ENCODE measurements at regions of chr1 and their contacts with region 1.

Region 1: DNA sequence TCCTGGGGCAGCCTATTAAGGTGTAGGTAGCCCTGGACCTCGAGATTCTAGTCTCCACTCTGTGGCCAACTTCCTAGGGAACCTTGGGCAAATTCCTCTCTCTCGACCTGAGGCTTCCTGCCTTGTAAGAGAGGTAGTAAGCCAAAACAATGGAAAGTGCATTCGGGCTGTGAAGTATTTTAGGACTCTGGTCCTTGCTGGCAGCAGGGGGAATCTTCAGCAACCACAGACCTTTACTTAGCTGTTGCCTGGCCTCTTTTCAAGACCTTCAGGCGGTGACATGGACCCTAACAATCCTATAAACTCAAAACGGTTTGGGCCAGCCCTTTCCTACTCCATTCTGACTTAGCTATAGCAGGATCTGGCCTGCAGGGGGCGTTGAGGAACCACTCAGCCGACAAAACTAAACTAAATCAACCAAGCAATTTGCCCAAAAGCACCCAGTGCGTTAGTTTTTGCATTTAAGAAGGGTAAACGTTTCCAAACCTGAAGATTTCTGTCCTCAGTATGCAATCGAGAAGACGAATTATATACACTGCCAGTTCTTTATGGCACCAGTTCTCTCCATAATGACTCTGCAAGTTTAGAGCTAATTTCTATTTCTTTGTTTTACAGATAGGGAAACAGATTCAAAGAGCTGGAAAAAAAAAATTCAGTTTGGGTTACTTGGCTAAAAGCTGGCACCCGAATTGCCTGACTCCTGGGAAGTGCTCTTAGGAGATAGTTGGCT is 10.9 kb upstream of the SESN2 start:
- DNase-seq: peak; percentile 73
- H3K4me3 Mint-ChIP-seq: peak overlapping the region; percentile 80
- H3K27ac Mint-ChIP-seq: peak overlapping the region; percentile 96
- H3K4me1 Mint-ChIP-seq: peaks cover 38% of the 10 kb centered on the region
- H3K27me3 Mint-ChIP-seq: no peaks in the 10 kb centered on the region
- CTCF ChIP-seq: peak; percentile 86

Region 2: GRCh38 chr1:28322194-28322593 is 73.7 kb after region 1 on chr1:
- CTCF ChIA-PET with region 1: interaction called, 11 read pairs
- intact Hi-C with region 1: loop called (anchors 5 kb)
- DNase-seq: peak; percentile 75
- H3K4me3 Mint-ChIP-seq: no peak overlapping the region
- H3K27ac Mint-ChIP-seq: no peak overlapping the region
- H3K4me1 Mint-ChIP-seq: peaks cover 22% of the 10 kb centered on the region
- H3K27me3 Mint-ChIP-seq: no peaks in the 10 kb centered on the region
- CTCF ChIP-seq: no peak

Region 3: GRCh38 chr1:28354121-28354520 is 105.7 kb after region 1 on chr1:
- CTCF ChIA-PET with region 1: interaction called, 15 read pairs
- intact Hi-C with region 1: loop called (anchors 5 kb)
- DNase-seq: peak; percentile 37
- H3K4me3 Mint-ChIP-seq: no peak overlapping the region
- H3K27ac Mint-ChIP-seq: peak overlapping the region; percentile 60
- H3K4me1 Mint-ChIP-seq: peaks cover 29% of the 10 kb centered on the region
- H3K27me3 Mint-ChIP-seq: no peaks in the 10 kb centered on the region
- CTCF ChIP-seq: no peak

Region 4: GRCh38 chr1:28359592-28360239 is 111.3 kb after region 1 on chr1:
- CTCF ChIA-PET with region 1: interaction called, 15 read pairs
- intact Hi-C with region 1: loop called (anchors 5 kb)
- DNase-seq: peak; percentile 73
- H3K4me3 Mint-ChIP-seq: no peak overlapping the region
- H3K27ac Mint-ChIP-seq: no peak overlapping the region
- H3K4me1 Mint-ChIP-seq: peaks cover 9% of the 10 kb centered on the region
- H3K27me3 Mint-ChIP-seq: no peaks in the 10 kb centered on the region
- CTCF ChIP-seq: peak; percentile 36

Region 5: DNA sequence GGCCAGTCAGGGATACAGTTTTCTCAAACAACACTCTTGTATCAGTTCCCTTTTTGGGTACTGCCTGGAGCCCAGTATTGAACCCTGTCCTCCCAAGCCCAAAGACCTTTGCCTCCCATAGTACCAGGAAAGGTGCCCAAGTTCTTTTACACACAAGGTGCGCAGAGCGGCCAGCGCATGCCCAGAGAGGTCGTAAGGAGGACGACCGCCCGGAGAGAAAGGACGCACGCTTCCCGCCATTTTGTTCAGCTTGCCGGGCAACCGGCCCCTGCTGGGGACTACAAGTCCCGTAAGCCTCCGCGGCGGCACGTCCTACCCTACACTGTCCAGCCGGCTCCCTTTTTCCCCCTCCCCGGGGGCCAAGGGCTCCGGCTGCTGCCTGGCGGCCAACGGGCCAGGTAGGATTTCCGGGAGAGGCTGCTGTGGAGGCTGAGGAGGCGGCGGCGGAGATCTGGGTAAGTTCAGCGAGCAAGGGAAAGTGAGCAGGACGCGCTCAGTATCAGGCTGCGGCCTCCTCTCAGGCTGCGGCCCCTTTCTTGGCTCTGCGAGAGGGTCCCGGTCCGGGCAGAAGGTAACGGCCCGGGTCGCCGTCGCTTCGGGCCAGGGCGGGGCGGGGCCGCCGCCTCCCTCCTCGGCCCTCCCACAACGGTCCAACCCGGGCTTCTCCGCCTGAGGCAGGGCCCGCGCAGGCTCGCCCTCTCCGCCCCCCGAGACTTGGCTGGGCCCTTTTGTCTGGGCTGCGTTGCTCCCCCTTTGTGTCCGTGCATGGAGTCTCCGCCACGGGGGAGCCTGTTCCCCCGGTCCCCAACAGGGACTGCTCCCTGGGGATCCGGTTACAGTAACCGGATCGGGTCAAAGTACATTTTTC is 121.2 kb after region 1 on chr1 and contains the start of gene PHACTR4:
- CTCF ChIA-PET with region 1: interaction called, 59 read pairs
- intact Hi-C with region 1: loop called (anchors 1 kb)
- DNase-seq: peak; percentile 96
- H3K4me3 Mint-ChIP-seq: peak within 1 kb of the TSS; percentile 90
- H3K27ac Mint-ChIP-seq: peak within 1 kb of the TSS; percentile 88
- H3K4me1 Mint-ChIP-seq: peaks cover 30% of the 10 kb centered on the region
- H3K27me3 Mint-ChIP-seq: no peaks in the 10 kb centered on the region
- CTCF ChIP-seq: no peak
- total RNA-seq, gene PHACTR4: 58.0 and 58.7 TPM in 2 replicates

Region 6: GRCh38 chr1:28505406-28506187 is 257.1 kb after region 1 on chr1 and contains the start of gene RCC1:
- CTCF ChIA-PET with region 1: no interaction called
- intact Hi-C with region 1: loop called (anchors 10 kb)
- DNase-seq: peak; percentile 96
- H3K4me3 Mint-ChIP-seq: peak within 1 kb of the TSS; percentile 96
- H3K27ac Mint-ChIP-seq: peak within 1 kb of the TSS; percentile 98
- H3K4me1 Mint-ChIP-seq: peaks cover 38% of the 10 kb centered on the region
- H3K27me3 Mint-ChIP-seq: no peaks in the 10 kb centered on the region
- CTCF ChIP-seq: no peak
- total RNA-seq, gene RCC1: 95.3 and 95.9 TPM in 2 replicates